ENCODE measurements at regions of chr11 and their contacts with region 1.

Region 1: GRCh38 chr11:68121067-68121899 is at the start of gene CHKA:
- DNase-seq: peak; percentile 94 to 96 (median 95)
- H3K4me3 ChIP-seq: peak within 1 kb of the TSS in 3 of 4 donors; percentile 45 to 89 (median 69)
- H3K27ac ChIP-seq: peak within 1 kb of the TSS; percentile 86 to 100 (median 99)
- H3K4me1 ChIP-seq: peaks cover 33 to 51% of the 10 kb centered on the region in 2 donors
- H3K27me3 ChIP-seq: no peaks in the 10 kb centered on the region
- CTCF ChIP-seq: peak in 1 of 6 experiments; percentile 25
- POLR2A ChIP-seq: peak; percentile 99
- total RNA-seq, gene CHKA: 26.6 to 67.0 (median 49.9) TPM

Region 2: DNA sequence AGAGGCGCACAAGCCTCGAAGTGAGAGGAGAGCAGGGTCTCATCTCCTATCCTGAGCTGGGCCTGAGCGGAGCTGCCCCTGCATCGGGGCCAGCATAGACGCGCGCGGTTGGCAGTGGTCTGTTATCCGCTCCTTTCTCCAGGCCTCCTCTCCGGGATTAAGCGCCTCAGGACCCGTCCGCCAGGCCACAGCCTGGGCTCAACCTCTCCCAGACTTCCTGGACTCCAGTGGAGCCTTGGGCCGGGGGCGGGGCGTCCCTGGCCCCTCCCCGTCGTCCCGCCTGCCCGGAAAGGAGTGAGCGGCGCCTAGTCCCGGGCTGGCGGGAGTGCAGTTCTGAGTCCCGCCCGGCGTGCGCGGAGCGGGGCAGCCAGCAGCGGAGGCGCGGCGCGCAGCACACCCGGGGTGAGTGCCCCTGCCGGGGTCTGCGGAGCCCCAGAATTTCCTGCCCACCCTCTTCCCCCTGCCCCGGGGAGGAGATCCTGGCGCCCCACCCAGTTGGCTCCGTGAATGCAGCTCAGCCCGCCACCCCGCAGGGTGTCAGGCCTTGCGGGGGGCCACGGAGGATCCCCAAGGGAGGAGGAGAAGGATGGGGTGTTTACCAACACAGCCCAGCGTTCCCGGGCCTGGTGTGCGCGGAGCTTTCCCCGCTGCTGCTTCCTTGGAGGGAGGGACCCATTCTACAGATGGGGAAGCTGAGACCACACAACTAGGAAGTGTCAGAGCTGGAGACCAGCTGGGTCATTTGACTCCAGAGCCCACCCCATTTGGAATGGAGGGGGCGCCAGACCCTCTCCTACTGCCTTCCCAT is 82.4 kb before region 1 on chr11 and contains the start of gene TCIRG1:
- intact Hi-C with region 1: loop called in 1 of 2 experiments (anchors 5 kb)
- DNase-seq: peak; percentile 88 to 93 (median 91)
- H3K4me3 ChIP-seq: peak within 1 kb of the TSS; percentile 60 to 95 (median 92)
- H3K27ac ChIP-seq: peak within 1 kb of the TSS; percentile 78 to 97 (median 92)
- H3K4me1 ChIP-seq: peaks cover 56 to 79% of the 10 kb centered on the region in 2 donors
- H3K27me3 ChIP-seq: no peaks in the 10 kb centered on the region
- CTCF ChIP-seq: peak in 1 of 6 experiments; percentile 37
- POLR2A ChIP-seq: peak; percentile 91 to 97
- total RNA-seq, gene TCIRG1: 57.0 to 384 (median 257) TPM

Region 3: DNA sequence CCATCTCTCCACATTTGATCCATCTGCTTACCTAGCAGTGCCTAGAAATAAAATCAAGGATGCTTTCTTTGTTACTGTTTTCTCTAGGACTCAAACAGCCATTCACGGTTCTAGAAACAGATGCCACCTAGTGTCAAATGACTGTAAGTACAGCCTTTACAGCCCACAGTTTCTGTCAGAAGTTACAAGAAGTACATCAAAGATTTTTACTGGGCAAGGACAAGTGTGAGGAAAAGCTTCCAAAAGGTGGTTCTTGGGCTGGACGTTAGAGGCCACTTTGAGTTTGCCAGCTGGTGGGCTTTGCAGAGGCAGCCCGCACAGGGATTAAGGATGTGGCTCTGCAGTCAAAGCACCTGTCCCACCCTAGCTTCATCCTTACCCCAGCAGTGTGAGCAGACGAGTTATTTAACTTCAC is 84.9 kb after region 1 on chr11:
- intact Hi-C with region 1: no loop called
- DNase-seq: peak in 1 of 7 donors; percentile 32
- H3K4me3 ChIP-seq: no peak overlapping the region
- H3K27ac ChIP-seq: peak overlapping the region in 3 of 5 donors; percentile 2 to 8 (median 8)
- H3K4me1 ChIP-seq: peaks cover 15 to 57% of the 10 kb centered on the region in 2 donors
- H3K27me3 ChIP-seq: no peaks in the 10 kb centered on the region
- CTCF ChIP-seq: peak; percentile 70 to 83 (median 77)
- POLR2A ChIP-seq: no peak

Measured in adrenal gland (tissue), 19 donors.